OCI-LY7 (cell line): ENCODE measurements at regions of chr1 and their contacts with region 1.

Region 1: GRCh38 chr1:40143891-40144575 is 17.2 kb upstream of the RLF start:
- DNase-seq: peak; percentile 86
- H3K4me3 ChIP-seq: no peak overlapping the region
- H3K27ac ChIP-seq: no peak overlapping the region
- H3K4me1 ChIP-seq: no peaks in the 10 kb centered on the region
- CTCF ChIP-seq: peak; percentile 95

Region 2: DNA sequence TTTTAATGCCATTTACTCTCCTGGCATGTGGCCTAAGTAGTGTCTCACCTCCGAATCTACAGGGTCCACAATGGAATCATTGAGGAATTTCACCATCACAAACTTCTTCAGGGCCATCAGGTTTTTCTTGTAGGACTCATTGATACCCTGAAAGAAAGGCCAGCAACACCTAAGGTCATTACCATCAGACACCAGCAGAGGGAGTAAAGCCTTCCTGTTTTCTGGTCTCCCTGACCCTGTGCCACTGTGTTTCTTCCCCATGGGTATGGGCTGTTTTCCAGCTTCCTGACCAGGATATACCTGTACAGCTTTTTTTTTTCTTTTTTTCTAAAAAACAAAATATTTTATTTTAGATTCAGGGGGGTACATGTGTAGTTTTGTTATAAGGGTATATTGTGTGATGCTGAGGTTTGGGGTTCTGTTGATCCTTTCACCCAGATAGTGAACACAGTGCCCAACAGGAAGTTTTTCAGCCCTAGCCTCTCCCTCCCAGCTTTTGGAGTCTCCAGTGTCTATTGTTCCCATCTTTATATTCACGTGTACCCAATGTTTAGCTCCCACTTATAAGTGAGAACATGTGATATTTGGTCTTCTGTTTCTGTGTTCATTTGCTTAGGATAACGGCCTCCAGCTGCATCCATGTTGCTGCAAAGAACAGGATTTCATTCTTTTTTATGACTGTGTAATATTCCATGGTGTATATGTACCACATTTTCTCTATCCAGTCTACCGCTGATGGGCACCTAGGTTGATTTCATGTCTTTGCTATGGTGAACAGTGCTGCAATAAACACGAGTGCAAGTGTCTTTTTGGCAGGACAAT is 65.3 kb before region 1 on chr1:
- CTCF ChIA-PET with region 1: no interaction called
- POLR2A ChIA-PET with region 1: no interaction called
- intact Hi-C with region 1: loop called (anchors 5 kb)
- DNase-seq: peak; percentile 70
- H3K4me3 ChIP-seq: no peak overlapping the region
- H3K27ac ChIP-seq: no peak overlapping the region
- H3K4me1 ChIP-seq: no peaks in the 10 kb centered on the region
- CTCF ChIP-seq: peak; percentile 86

Region 3: GRCh38 chr1:40305457-40305856 is 161.4 kb after region 1 on chr1:
- CTCF ChIA-PET with region 1: interaction called, 3 read pairs
- POLR2A ChIA-PET with region 1: no interaction called
- intact Hi-C with region 1: loop called (anchors 1 kb)
- DNase-seq: peak; percentile 50
- H3K4me3 ChIP-seq: no peak overlapping the region
- H3K27ac ChIP-seq: no peak overlapping the region
- H3K4me1 ChIP-seq: no peaks in the 10 kb centered on the region
- CTCF ChIP-seq: peak; percentile 64

Region 4: GRCh38 chr1:40315239-40315794 is 171.3 kb after region 1 on chr1:
- CTCF ChIA-PET with region 1: interaction called, 10 read pairs
- POLR2A ChIA-PET with region 1: no interaction called
- intact Hi-C with region 1: no loop called
- DNase-seq: peak; percentile 93
- H3K4me3 ChIP-seq: peak overlapping the region; percentile 56
- H3K27ac ChIP-seq: peak overlapping the region; percentile 44
- H3K4me1 ChIP-seq: peaks cover 53% of the 10 kb centered on the region
- CTCF ChIP-seq: peak; percentile 87

Region 5: DNA sequence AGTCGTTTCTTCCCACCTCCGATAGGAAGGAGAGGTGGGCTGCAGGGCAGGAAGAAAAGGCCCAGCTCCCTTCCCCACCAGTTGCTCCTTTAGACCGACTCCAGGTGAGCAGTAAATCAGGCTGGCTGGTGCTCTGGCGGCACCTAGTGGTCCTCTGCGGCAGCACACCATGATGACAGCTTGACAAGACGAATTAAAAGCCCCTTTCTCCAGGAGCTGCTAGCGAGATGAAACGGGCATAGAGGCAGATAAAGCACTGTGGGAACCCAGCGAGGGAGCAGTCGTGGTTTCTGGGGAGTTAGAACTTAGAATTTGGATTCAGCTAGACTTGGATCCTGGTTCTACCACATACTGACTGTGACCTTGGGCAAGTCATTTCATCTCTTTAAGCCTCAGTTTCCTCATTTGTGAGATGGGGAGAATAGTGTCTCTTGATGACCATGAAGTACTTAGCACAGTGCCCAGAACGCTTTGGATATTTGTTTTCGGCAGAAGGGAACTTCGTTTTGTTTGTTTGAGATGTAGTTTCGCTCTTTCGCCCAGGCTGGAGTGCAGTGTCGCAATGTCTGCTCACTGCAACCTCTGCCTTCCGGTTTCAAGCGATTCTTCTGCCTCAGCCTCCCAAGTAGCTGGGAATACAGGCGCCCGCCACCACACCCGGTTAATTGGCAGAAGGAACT is 194.9 kb after region 1 on chr1:
- CTCF ChIA-PET with region 1: interaction called, 17 read pairs
- POLR2A ChIA-PET with region 1: interaction called, 6 read pairs
- intact Hi-C with region 1: loop called (anchors 1 kb)
- DNase-seq: peak; percentile 88
- H3K4me3 ChIP-seq: no peak overlapping the region
- H3K27ac ChIP-seq: no peak overlapping the region
- H3K4me1 ChIP-seq: peaks cover 22% of the 10 kb centered on the region
- CTCF ChIP-seq: peak; percentile 99

Region 6: GRCh38 chr1:40404670-40405462 is 260.8 kb after region 1 on chr1:
- CTCF ChIA-PET with region 1: no interaction called
- POLR2A ChIA-PET with region 1: no interaction called
- intact Hi-C with region 1: loop called (anchors 1 kb)
- DNase-seq: peak; percentile 72
- H3K4me3 ChIP-seq: no peak overlapping the region
- H3K27ac ChIP-seq: peak overlapping the region; percentile 34
- H3K4me1 ChIP-seq: peaks cover 45% of the 10 kb centered on the region
- CTCF ChIP-seq: peak; percentile 99

Region 7: DNA sequence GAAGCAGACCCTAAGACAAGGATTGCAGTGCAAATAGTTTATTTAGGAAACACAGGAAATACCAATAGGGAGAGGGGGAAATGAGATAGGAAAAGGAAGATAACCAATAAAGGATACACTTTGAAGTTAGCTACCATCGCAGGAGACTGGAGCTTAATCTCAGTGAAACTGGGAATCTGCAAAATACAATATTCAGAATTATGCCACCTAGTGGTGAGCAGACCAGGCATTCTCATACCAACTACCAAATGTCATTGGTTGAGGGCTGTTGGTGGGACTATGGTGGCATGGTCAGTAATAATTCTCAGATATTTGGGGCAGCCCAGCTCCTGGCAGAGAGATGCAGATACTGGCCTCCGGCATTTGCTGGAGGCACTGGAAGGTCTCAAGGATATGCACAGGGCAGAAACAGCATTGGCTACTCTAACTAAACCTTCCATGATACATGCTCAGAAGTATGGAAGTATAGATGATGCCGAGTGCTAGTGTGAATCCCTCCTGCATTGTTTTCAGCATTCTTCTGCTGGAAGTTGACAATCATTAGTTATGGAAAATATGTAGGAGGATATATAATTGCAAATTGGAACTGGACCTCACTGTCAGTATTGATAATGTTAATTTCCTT is 294.5 kb after region 1 on chr1:
- CTCF ChIA-PET with region 1: no interaction called
- POLR2A ChIA-PET with region 1: interaction called, 3 read pairs
- intact Hi-C with region 1: loop called (anchors 10 kb)
- DNase-seq: peak; percentile 62
- H3K4me3 ChIP-seq: no peak overlapping the region
- H3K27ac ChIP-seq: no peak overlapping the region
- H3K4me1 ChIP-seq: no peaks in the 10 kb centered on the region
- CTCF ChIP-seq: peak; percentile 96